MCF 10A (cell line): ENCODE measurements at regions of chr1 and their contacts with region 1.

Region 1: DNA sequence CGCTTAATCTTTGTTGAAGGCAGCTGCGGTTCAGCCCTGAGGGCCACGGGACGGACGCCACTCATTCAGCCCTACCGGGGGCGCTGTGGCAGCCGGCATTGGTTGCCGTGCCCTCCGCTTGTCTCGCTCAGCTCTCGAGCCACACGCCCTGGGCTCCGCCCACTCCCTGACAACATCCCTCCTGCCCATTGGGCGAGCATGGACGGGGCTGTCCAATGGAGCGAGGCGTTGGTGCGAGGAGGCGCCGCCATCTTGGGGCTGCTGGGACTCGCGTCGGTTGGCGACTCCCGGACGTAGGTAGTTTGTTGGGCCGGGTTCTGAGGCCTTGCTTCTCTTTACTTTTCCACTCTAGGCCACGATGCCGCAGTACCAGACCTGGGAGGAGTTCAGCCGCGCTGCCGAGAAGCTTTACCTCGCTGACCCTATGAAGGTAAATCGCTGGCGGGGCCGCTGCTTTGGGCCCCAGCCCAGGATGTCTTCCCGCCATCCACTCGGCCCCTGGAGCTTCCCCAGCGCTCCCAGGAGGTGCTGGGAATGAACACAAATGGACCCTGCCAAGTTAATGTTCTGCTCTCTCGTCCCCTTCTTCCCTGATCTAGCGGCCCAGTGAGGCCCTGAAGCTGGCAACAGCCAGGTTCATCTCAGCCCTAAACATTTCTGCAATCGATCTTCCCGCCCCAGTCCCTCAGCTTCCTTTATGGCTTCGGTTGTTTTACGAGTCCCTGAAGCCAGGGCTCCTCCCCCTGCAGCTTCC is at the start of gene SRP9:
- DNase-seq: peak; percentile 100
- H3K4me3 Mint-ChIP-seq: no peak within 1 kb of the TSS
- H3K27ac Mint-ChIP-seq: no peak within 1 kb of the TSS
- H3K4me1 Mint-ChIP-seq: peaks cover 21% of the 10 kb centered on the region
- H3K27me3 Mint-ChIP-seq: no peaks in the 10 kb centered on the region
- CTCF ChIP-seq: peak; percentile 96
- total RNA-seq, gene SRP9: 417 and 511 TPM in 2 replicates

Region 2: DNA sequence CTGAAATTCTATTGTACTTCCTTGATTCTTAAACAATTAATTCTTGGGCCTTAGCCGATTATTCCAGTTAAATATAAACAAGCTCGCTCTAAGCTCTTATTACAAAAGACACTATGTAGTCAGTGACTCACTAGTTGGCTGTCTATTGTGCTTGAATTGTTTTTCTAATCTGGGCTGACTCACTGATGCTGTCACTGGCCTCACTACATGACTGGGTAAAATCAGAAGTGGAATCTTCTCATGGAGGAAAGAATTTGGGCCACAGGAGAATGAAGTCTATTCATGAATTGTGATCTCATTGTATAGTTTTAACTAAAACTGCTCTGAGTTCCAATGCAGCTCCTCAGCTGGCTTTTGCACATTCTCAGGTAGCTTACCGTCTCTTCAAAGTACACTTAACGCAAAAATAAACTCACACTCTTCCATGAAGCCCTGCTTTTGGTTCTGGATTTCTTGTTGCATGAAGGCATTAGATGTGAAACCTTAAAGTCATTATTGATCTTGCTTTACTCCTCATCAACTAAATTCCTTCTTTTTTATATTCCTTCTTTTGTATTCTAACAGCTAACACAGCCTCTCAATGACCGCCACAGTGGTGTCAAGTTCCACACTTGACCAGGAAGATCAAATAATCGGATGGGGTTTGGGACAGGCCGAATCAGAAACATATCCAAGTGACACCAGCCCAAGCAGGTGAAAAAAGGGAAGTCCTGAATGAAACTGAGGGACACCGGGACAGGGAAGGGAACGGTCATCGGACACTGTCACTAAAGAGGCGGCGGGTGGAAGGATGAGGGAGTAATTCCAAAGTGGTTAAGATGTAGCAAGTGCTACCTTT is 269.0 kb before region 1 on chr1:
- CTCF ChIA-PET with region 1: interaction called, 45 read pairs
- POLR2A ChIA-PET with region 1: interaction called, 49 read pairs
- intact Hi-C with region 1: loop called (anchors 1 kb)
- DNase-seq: peak; percentile 99
- H3K4me3 Mint-ChIP-seq: no peak overlapping the region
- H3K27ac Mint-ChIP-seq: peak overlapping the region; percentile 83
- H3K4me1 Mint-ChIP-seq: peaks cover 32% of the 10 kb centered on the region
- H3K27me3 Mint-ChIP-seq: no peaks in the 10 kb centered on the region
- CTCF ChIP-seq: no peak

Region 3: DNA sequence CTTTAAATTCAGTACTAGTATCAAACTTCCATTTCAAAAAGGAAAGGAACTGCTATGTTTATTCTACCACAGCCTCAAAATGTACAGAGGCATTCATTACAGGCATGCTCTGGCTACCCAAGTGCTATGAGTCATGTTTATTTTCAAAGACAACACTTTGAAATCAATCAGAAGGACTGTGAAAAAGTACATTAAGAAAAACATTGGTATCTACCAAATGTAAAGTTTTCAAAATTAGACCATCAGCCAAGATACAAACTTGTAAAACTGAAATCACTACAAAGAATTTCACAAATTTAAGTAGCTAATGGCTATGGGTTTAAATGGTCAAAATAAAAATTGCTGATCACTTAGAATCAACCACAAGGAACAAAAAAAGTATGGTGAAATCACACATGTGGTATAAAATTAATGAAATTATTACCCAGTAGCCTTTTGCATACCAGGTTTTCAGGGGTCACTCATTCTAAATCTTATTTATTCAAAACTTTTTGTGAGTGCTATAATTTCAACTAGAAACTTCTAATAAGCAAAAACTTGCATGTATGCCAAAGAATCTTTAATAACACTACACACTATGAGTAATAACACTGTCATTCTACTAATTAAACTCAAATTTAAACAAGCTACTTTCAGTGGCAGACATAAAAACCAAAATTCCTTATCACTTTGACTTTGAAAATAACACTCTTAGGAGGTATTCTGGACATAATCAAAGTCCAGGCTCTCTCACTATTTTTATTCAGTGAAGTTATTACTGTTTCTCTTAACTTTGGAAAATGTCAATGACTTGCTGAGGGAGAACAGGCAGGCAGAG is 174.0 kb before region 1 on chr1:
- CTCF ChIA-PET with region 1: interaction called, 11 read pairs
- POLR2A ChIA-PET with region 1: interaction called, 31 read pairs
- intact Hi-C with region 1: no loop called
- DNase-seq: peak; percentile 86
- H3K4me3 Mint-ChIP-seq: peak overlapping the region; percentile 68
- H3K27ac Mint-ChIP-seq: peak overlapping the region; percentile 95
- H3K4me1 Mint-ChIP-seq: peaks cover 61% of the 10 kb centered on the region
- H3K27me3 Mint-ChIP-seq: no peaks in the 10 kb centered on the region
- CTCF ChIP-seq: no peak

Region 4: DNA sequence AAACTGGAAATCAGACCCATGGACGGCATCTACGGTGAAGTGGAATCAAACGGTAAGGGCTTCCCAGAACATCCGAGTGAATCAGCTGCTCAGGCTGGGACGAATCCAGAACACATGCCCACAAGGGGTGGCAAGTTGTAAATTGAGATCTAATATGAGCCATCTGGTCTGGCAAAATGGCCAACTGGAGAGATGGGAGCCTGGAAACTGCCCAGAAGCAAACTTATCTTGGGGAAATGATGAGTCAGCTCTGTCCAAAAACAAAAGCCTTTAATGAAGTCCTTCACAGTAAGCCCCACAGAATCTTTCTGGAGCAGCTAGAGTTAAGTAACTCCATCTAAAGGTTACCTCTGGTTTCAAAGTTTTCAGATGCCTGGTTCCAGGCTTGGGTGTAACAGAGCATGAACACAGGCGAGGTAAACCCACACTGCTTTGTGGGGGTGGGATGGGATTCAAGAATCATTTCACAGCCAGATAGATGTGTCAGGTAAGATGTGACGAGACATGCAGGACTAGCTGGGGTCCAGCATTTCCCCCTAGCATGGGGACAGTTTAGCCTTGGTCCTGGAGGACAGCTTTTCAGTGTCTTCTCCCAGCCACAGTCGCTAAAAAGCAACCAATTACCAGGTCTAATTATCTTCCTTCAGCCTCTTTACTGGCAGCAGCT is 10.7 kb before region 1 on chr1:
- CTCF ChIA-PET with region 1: interaction called, 35 read pairs
- POLR2A ChIA-PET with region 1: interaction called, 67 read pairs
- intact Hi-C with region 1: no loop called
- DNase-seq: peak; percentile 99
- H3K4me3 Mint-ChIP-seq: peak overlapping the region; percentile 40
- H3K27ac Mint-ChIP-seq: peak overlapping the region; percentile 78
- H3K4me1 Mint-ChIP-seq: peaks cover 38% of the 10 kb centered on the region
- H3K27me3 Mint-ChIP-seq: no peaks in the 10 kb centered on the region
- CTCF ChIP-seq: no peak

Region 5: DNA sequence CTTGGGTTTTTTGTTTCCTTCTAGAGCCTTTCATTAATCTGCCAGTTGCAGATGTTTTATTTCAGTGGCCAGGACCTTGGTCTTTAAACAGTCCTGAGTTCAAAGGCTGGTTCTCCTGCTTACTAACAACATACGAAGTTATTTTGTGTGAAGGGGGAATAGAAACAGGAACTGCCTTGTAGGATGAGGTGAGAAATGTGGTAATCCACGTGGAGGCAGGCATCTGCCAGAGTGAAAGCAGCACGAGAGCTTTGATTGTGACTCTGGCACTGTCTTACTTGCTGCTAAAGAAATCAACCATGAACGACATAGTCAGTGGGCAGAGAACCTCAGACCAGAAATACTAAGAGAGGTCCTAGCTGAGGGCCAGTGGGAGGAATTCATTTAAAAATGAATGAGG is 74.0 kb after region 1 on chr1:
- CTCF ChIA-PET with region 1: interaction called, 32 read pairs
- POLR2A ChIA-PET with region 1: interaction called, 22 read pairs
- intact Hi-C with region 1: no loop called
- DNase-seq: no peak
- H3K4me3 Mint-ChIP-seq: no peak overlapping the region
- H3K27ac Mint-ChIP-seq: no peak overlapping the region
- H3K4me1 Mint-ChIP-seq: no peaks in the 10 kb centered on the region
- H3K27me3 Mint-ChIP-seq: no peaks in the 10 kb centered on the region
- CTCF ChIP-seq: no peak

Region 6: GRCh38 chr1:225977937-225978748 is 200.4 kb after region 1 on chr1:
- CTCF ChIA-PET with region 1: interaction called, 119 read pairs
- POLR2A ChIA-PET with region 1: interaction called, 38 read pairs
- intact Hi-C with region 1: loop called (anchors 1 kb)
- DNase-seq: no peak
- H3K4me3 Mint-ChIP-seq: no peak overlapping the region
- H3K27ac Mint-ChIP-seq: no peak overlapping the region
- H3K4me1 Mint-ChIP-seq: peaks cover 5% of the 10 kb centered on the region
- H3K27me3 Mint-ChIP-seq: no peaks in the 10 kb centered on the region
- CTCF ChIP-seq: no peak